Endothelial cell of umbilical vein (primary cell): ENCODE measurements at regions of chr19 and their contacts with region 1.

Region 1: DNA sequence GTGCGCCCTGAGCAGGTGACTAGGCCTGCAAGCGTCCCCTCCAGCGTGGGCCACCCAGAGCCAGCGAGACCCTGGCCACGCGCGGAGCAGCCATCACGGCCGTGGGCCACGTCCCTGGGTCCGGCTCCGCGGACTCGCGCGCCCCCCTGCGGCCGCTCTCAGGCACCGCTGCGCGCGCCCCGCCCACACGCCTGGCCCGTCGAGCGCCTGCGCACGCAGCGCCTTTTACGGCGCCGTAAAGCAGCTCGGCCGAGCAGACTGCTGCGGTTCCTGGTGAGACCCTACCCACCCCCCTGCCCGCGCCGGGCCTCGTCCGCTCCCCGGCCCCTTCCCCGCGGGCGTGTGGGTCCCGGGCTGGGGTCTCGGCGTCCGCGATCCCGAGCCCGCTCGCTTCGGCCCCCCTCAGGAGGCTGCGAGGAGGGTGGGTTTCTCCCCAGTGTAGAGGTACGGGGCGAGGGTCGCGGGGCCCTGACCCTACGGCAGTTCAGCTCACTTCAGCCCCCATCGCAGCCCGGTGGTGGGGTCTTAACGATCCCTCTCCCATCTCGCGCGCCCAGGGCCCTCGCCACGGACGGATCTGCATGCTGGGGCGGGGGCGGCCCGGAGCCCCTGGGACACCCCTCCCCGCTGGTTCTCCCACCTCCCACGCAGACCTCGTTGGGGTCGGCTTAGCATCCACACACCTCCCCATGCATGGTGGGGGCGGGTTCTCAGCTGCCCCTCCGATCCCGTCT is at the start of gene TRAPPC5:
- DNase-seq: peak; percentile 83
- H3K4me3 ChIP-seq: peak within 1 kb of the TSS; percentile 72 to 100 (median 79)
- H3K27ac ChIP-seq: peak within 1 kb of the TSS; percentile 65
- H3K4me1 ChIP-seq: peaks cover 7% of the 10 kb centered on the region
- H3K27me3 ChIP-seq: peaks cover 2% of the 10 kb centered on the region in 2 experiments
- CTCF ChIP-seq: peak; percentile 75 to 98
- POLR2A ChIP-seq: peak; percentile 67
- total RNA-seq, gene TRAPPC5: 148 and 172 TPM in 2 replicates

Region 2: GRCh38 chr19:7355151-7355820 is 325.5 kb before region 1 on chr19:
- CTCF ChIA-PET with region 1: interaction called, 36 read pairs
- POLR2A ChIA-PET with region 1: no interaction called
- dilution Hi-C with region 1: no loop called
- intact Hi-C with region 1: loop called (anchors 1 kb)
- DNase-seq: no peak
- H3K4me3 ChIP-seq: no peak overlapping the region
- H3K27ac ChIP-seq: no peak overlapping the region
- H3K4me1 ChIP-seq: no peaks in the 10 kb centered on the region
- H3K27me3 ChIP-seq: peaks cover 0 to 5% of the 10 kb centered on the region in 2 experiments
- CTCF ChIP-seq: no peak
- POLR2A ChIP-seq: no peak

Region 3: DNA sequence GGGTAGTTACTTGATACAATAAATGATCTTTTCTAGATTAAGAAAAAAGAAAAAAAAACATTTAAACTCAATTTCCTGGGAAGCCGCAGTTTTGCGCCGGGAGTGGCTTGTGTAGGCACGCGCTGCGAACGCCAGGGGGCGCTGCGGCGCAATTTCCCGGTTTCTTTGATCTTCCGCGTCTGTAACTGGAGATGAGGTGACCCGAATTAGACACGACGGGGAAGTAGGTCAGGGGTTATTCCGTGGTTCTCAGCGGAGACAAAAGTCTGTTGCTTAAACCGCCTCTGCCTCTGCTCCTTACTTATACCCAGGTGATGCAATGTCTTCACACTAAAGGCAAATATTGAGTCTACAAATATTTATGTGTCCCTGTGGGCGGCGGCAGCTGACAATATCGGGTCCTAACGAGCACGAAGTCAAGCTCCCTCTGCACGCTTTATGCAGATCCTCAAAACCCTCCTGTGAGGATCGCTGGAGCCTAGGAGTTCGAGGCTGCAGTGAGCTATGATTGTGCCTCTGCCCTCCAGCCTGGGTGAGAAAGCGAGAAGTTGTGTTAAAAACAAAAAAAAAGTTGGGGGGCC is 28.6 kb before region 1 on chr19:
- CTCF ChIA-PET with region 1: interaction called, 37 read pairs
- POLR2A ChIA-PET with region 1: no interaction called
- dilution Hi-C with region 1: no loop called
- intact Hi-C with region 1: loop called (anchors 1 kb)
- DNase-seq: peak; percentile 79
- H3K4me3 ChIP-seq: peak overlapping the region in 1 of 3 experiments; percentile 62
- H3K27ac ChIP-seq: no peak overlapping the region
- H3K4me1 ChIP-seq: peaks cover 14% of the 10 kb centered on the region
- H3K27me3 ChIP-seq: peaks cover 0 to 2% of the 10 kb centered on the region in 2 experiments
- CTCF ChIP-seq: peak; percentile 90 to 99
- POLR2A ChIP-seq: no peak

Region 4: DNA sequence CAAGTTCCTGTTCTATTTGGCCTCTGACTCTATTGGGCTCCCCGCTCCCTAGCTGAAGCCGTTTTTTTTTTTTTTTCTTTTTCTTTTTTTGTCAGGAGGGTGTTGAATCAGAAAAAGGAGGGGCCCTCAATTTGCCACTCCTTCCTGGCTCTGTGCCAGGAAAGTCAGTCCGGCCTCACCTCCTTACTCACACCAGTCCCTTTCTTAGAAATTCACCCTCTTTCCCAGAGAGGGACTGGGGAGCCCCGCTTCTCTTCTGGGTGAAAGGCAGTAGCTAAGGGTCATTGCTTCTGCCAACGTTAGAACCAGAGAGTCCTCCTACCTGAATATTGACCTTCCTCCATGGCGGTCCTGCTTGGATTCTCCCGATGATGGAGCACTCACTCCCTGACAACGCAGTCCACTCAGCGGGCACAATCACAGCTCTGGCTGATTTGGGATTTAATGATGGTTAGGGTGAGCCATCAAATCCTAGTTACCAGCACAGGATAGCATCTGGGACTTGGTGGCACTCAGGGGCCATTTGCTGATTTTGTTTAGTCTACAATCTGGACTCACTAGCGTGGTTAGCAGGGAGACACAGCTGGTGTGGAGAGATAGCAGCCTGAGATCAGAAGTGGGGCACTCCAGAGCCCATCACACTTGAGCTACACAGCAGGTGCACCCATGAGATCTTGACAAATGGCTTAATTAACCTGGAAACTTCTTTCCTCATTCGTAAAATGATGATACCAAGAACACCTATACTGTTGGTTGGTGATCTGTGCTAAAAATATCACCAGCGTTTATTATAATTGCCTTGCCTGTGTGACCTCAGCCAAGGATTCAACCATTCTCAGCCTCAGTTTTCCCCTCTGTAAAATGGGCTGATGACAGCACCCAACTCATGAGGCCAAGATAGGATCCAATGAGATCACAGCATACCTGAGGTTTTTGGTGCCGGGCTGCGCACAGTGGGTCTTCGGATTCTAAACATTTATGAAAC is 18.9 kb after region 1 on chr19:
- CTCF ChIA-PET with region 1: interaction called, 21 read pairs
- POLR2A ChIA-PET with region 1: no interaction called
- dilution Hi-C with region 1: no loop called
- intact Hi-C with region 1: no loop called
- DNase-seq: no peak
- H3K4me3 ChIP-seq: no peak overlapping the region
- H3K27ac ChIP-seq: no peak overlapping the region
- H3K4me1 ChIP-seq: no peaks in the 10 kb centered on the region
- H3K27me3 ChIP-seq: no peaks in the 10 kb centered on the region
- CTCF ChIP-seq: no peak
- POLR2A ChIP-seq: no peak

Region 5: DNA sequence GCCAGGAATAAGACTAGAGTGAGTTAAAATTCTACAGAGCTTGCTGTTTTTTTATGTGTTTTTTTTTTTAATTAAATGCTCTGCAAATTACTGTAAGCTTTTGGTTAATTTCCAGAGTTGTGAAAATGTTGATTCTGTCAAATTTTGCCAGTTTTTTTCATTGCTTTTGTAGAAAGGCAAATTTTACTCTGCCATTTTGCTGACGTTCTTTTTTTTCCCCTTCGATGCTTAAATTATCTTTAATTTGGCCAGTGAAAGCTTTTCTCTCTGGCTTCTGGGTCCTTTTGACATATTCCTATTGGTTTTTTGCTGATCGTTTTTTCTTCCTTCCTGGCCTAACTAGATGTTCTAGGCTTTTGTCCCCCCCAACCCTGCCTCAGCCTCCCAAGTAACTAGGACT is 125.5 kb after region 1 on chr19:
- CTCF ChIA-PET with region 1: interaction called, 121 read pairs
- POLR2A ChIA-PET with region 1: interaction called, 3 read pairs
- dilution Hi-C with region 1: no loop called
- intact Hi-C with region 1: no loop called
- DNase-seq: no peak
- H3K4me3 ChIP-seq: no peak overlapping the region
- H3K27ac ChIP-seq: no peak overlapping the region
- H3K4me1 ChIP-seq: no peaks in the 10 kb centered on the region
- H3K27me3 ChIP-seq: no peaks in the 10 kb centered on the region
- CTCF ChIP-seq: no peak
- POLR2A ChIP-seq: no peak

Region 6: DNA sequence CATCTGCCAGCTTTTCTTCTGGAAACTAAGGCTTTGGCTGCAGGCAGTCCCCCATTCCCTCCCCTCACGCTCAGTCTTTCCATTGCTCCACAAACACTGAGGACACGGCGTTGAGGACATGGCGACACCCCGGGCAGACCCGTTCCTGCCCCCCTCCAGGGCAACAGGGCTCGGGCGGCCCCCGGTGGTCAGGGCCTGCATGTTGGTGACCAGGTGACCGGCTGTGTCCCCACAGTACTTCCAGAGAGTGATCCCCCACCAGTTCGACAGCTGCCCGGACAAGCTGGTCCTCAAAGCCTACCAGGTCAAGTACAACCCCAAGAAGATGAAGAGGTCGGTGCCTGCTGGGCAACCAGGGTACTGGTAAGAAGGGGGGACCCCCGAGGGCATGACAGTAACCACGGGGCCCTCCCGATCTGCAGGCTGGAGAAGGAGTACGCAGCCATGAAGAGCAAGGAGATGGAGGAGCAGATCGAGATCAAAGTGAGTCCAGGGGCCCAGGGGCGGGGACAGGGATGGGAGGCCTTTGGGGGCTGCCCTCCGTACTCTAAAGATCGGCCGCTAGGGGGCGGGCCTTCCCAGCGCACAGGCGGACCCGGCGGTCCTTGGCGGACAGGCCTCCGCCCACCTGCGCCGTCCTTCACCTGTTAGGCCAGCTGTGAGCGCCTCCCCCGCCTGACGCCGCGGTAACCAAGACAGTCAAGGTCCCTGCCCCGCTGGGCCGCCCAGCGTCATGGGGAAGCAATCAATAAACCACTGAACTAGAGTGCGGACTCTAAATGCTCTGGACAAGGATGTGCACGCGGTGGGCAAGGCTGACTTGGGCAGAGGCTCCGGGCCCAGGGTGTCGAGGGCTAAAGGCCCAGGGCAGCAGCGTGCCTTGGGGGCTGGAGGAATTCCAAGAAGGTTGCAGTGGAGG is 172.3 kb after region 1 on chr19:
- CTCF ChIA-PET with region 1: interaction called, 3 read pairs
- POLR2A ChIA-PET with region 1: no interaction called
- dilution Hi-C with region 1: no loop called
- intact Hi-C with region 1: loop called (anchors 5 kb)
- DNase-seq: peak; percentile 49
- H3K4me3 ChIP-seq: no peak overlapping the region
- H3K27ac ChIP-seq: no peak overlapping the region
- H3K4me1 ChIP-seq: no peaks in the 10 kb centered on the region
- H3K27me3 ChIP-seq: no peaks in the 10 kb centered on the region
- CTCF ChIP-seq: peak; percentile 63 to 92
- POLR2A ChIP-seq: no peak